ENCODE measurements at regions of chr22 and their contacts with region 1.

Region 1: DNA sequence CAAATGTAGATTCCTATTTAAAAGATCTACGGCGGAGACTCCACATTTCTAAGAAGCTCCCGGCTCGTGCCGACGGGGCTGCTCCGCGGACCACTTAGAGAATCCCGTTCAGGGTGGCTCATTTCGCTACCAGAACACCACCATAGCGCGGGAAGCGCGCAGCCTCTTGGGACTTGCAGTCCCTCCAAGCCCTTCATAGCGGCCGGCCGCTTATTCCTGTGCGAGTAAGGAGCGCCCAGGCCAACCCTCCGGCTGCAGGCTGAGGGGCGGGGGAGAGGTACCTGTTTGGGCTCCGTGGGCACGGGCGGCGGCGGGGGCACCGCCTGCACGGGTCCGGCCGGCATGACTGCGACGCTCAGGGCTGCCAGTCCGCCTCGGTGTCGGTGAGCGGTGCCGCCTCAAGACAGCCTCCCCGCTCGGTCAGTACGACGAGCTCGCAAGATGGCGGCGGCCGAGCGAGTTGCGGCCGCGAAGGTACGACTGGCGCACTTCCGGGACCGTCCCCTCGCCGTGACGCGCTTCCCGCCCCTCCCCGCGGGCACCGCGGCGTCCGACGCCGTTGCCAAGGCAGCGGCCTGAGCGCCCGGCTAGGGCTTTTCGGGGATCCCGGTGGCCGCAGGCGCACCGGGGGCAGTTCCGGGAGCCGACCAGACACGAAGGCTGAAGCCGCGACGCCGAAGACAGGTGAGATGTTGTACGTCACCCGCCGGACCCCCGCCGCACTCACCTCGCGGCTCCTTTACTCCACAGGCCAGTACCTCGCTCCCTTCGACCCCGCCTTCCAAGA is at the starts of genes CCDC157 and SF3A1:
- DNase-seq: peak; percentile 94
- H3K4me3 ChIP-seq: peak within 1 kb of the TSS; percentile 69 to 91 (median 77)
- H3K27ac ChIP-seq: peak within 1 kb of the TSS; percentile 94 to 97 (median 96)
- H3K4me1 ChIP-seq: peaks cover 0 to 41% (median 37%) of the 10 kb centered on the region in 4 donors
- H3K27me3 ChIP-seq: no peaks in the 10 kb centered on the region
- CTCF ChIP-seq: no peak
- EP300 ChIP-seq: peak in 1 of 4 donors; percentile 34
- POLR2A ChIP-seq: peak; percentile 76 to 90
- total RNA-seq, gene CCDC157: 0.83 to 2.0 (median 1.7) TPM
- total RNA-seq, gene SF3A1: 24.2 to 61.5 (median 33.5) TPM

Region 2: DNA sequence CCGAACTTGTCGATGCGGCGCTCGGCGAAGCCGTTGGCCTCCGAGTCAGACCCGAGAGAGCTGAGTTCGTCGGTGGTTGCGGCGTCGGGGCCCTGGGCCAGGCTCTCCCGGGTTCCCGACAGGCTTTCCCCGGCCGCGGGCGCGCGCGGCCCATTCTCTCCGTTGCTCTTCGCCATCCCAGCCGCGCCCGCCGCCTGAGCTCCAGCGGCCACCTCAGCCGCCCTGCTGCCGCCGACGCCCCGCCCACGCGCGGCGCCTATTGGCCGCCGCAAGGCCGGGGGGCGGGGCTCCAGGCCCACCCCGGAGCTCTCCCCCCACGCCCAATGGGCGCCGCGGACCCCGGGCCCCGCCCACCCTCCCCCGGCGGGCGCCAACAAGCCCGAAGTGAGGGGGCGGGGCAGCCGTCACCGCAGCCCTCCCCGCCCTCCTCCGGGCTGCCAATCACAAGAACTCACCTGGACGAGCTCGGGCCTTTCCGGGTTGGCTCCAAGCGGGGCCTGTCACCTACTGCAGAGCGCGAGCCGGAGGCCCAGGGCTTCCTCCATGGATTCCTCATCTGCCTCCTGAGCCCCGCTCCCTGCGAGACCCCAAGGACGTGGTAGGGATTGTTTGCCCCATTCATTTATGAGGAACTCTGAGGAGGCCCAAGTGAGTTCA is 29.8 kb before region 1 on chr22 and contains the start of gene TBC1D10A:
- intact Hi-C with region 1: loop called (anchors 2 kb)
- DNase-seq: peak; percentile 94
- H3K4me3 ChIP-seq: peak within 1 kb of the TSS; percentile 83 to 100 (median 96)
- H3K27ac ChIP-seq: peak within 1 kb of the TSS; percentile 91 to 98 (median 92)
- H3K4me1 ChIP-seq: peaks cover 0 to 48% (median 44%) of the 10 kb centered on the region in 4 donors
- H3K27me3 ChIP-seq: no peaks in the 10 kb centered on the region
- CTCF ChIP-seq: no peak
- EP300 ChIP-seq: no peak
- POLR2A ChIP-seq: peak; percentile 68 to 75
- total RNA-seq, gene TBC1D10A: 12.5 to 31.0 (median 26.8) TPM

Region 3: DNA sequence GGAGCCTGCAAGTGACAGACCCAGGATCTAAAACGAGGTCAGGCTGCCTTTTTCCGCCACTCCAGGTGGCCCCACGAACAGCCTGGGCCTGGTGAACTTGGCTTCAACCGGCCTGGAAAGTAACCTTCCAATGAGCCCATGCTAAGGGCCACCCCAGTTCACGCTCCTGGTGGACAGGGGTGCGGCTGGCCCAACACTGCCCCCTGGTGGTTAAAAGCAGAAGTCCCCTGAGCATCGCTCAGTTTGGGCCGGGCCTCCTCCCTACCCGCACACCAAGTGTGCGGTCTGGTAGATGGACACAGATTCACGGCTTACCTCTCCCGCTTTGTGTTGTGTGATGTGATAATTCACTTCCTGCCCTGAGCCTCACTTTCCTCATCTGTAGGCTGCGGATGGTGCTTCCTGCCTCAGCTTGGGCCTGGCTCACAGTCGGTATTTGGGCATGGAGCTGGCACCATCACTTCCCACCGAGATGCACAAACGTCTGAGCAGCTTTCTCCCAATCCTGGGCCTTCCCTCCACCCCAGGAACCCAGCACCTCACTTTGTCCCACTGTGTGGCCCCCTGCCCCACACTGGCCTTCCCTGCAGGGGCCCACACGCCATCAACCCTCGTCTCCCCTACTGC is 128.8 kb after region 1 on chr22:
- intact Hi-C with region 1: no loop called
- DNase-seq: peak; percentile 77
- H3K4me3 ChIP-seq: no peak overlapping the region
- H3K27ac ChIP-seq: no peak overlapping the region
- H3K4me1 ChIP-seq: peaks cover 0 to 5% (median 0%) of the 10 kb centered on the region in 4 donors
- H3K27me3 ChIP-seq: peaks cover 0 to 4% (median 0%) of the 10 kb centered on the region in 3 donors
- CTCF ChIP-seq: peak; percentile 78 to 93 (median 87)
- EP300 ChIP-seq: no peak
- POLR2A ChIP-seq: no peak

Region 4: DNA sequence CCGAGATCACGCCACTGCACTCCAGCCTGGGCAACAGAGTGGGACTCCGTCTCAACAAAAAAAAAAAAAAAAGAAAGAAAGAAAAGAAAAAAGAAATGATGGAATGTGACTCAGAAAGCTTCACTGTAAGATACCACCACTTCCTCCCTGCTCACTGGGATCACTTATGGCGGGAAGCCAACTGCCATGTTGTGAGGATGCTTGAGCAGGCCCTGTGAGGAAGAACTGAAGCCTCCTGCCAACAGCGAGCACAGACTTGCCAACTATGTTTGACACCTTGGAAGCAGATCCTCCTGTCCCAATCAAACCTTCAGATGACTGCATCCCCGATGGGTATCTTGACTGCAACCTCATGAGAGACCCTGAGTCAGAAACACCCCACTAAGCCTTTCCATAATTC is 181.6 kb after region 1 on chr22:
- intact Hi-C with region 1: no loop called
- DNase-seq: no peak
- H3K4me3 ChIP-seq: no peak overlapping the region
- H3K27ac ChIP-seq: no peak overlapping the region
- H3K4me1 ChIP-seq: peaks cover 0 to 12% (median 10%) of the 10 kb centered on the region in 4 donors
- H3K27me3 ChIP-seq: peaks cover 3 to 22% (median 18%) of the 10 kb centered on the region in 3 donors
- CTCF ChIP-seq: no peak
- EP300 ChIP-seq: no peak
- POLR2A ChIP-seq: no peak